ENCODE measurements at regions of chr2 and their contacts with region 1.

Region 1: GRCh38 chr2:165874445-165875039 is 79.0 kb downstream of the TTC21B start:
- DNase-seq: peak in 1 of 2 experiments; percentile 71
- H3K4me3 ChIP-seq: no peak overlapping the region
- H3K27ac ChIP-seq: no peak overlapping the region
- H3K4me1 ChIP-seq: no peaks in the 10 kb centered on the region
- H3K27me3 ChIP-seq: no peaks in the 10 kb centered on the region
- CTCF ChIP-seq: peak; percentile 72

Region 2: GRCh38 chr2:165015052-165015642 is 859.4 kb before region 1 on chr2:
- CTCF ChIA-PET with region 1: no interaction called
- POLR2A ChIA-PET with region 1: no interaction called
- intact Hi-C with region 1: loop called (anchors 10 kb)
- DNase-seq: peak in 1 of 2 experiments; percentile 40
- H3K4me3 ChIP-seq: no peak overlapping the region
- H3K27ac ChIP-seq: no peak overlapping the region
- H3K4me1 ChIP-seq: no peaks in the 10 kb centered on the region
- H3K27me3 ChIP-seq: no peaks in the 10 kb centered on the region
- CTCF ChIP-seq: peak; percentile 85

Region 3: DNA sequence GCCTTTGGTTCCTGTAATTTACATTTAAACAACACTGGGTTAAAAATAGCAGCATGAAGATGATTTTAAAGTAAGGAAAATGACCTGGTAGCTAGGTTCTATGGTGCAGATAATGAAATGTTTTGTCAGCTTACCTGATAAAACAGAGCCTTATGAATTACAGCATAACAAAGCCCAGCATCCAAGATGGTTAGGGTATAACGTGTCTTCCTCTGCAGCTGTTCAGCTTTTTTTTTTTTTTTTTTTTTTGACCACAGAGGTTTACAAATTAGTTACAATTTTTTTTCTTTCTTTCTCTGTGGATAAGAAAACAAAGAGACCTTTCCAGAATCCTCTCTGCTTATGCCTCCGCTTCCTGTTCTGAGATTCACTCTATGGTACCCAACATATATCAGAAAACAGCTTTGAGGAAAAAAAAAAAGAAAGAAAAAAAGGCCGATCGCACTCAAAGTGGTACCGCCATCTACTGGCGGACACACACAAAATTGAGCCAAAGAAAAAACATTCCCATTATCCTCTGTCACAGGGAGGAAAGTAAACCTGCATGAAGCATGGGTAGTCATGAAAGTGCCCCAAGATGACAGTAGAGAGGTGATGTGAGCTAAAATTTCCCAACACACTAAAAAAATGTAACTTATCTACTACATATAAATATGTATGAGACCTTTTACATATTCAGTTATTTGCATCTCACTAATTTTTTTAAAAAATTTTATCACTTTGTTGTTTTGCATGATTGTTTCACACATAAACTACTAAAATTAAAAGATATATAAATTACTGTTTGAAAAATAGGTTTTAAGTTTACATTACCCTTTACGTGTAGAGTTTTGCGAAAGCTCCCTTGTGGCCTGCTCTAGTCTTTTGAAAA is 670.6 kb before region 1 on chr2 and contains the start of gene SCN3A:
- CTCF ChIA-PET with region 1: interaction called, 12 read pairs
- POLR2A ChIA-PET with region 1: no interaction called
- intact Hi-C with region 1: no loop called
- DNase-seq: peak in 1 of 2 experiments; percentile 10
- H3K4me3 ChIP-seq: no peak within 1 kb of the TSS
- H3K27ac ChIP-seq: no peak within 1 kb of the TSS
- H3K4me1 ChIP-seq: no peaks in the 10 kb centered on the region
- H3K27me3 ChIP-seq: no peaks in the 10 kb centered on the region
- CTCF ChIP-seq: peak; percentile 66
- total RNA-seq, gene SCN3A: not detected in 2 replicates

Region 4: GRCh38 chr2:165401285-165401852 is 473.2 kb before region 1 on chr2:
- CTCF ChIA-PET with region 1: interaction called, 3 read pairs
- POLR2A ChIA-PET with region 1: interaction called, 7 read pairs
- intact Hi-C with region 1: loop called (anchors 1 kb)
- DNase-seq: no peak
- H3K4me3 ChIP-seq: no peak overlapping the region
- H3K27ac ChIP-seq: no peak overlapping the region
- H3K4me1 ChIP-seq: no peaks in the 10 kb centered on the region
- H3K27me3 ChIP-seq: no peaks in the 10 kb centered on the region
- CTCF ChIP-seq: peak; percentile 69

Region 5: DNA sequence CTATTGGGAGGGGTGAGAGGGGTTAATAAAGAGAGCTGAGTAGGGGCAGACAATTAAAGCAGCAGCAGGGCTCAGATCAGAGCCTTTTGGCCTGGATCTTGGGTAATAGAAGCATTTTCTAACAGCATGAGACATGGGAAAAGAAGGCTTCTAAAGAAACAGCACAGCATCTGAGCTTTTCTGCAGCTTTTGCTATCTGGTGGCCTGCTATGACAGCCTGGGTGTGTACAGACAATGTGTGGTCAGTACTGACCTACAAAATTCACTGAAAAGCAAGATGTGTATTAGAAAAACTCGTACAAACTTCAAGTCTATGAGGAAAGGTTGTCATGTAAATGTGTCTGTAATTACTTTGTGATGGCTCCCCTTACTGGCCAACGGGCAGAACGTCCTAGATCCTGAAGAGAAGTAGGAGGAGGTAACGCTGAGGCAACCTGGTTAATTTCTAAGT is 176.1 kb before region 1 on chr2:
- CTCF ChIA-PET with region 1: no interaction called
- POLR2A ChIA-PET with region 1: no interaction called
- intact Hi-C with region 1: loop called (anchors 1 kb)
- DNase-seq: peak in 1 of 2 experiments; percentile 14
- H3K4me3 ChIP-seq: no peak overlapping the region
- H3K27ac ChIP-seq: no peak overlapping the region
- H3K4me1 ChIP-seq: no peaks in the 10 kb centered on the region
- H3K27me3 ChIP-seq: no peaks in the 10 kb centered on the region
- CTCF ChIP-seq: peak; percentile 44

Region 6: GRCh38 chr2:165778653-165779451 is 95.7 kb before region 1 on chr2:
- CTCF ChIA-PET with region 1: interaction called, 4 read pairs
- POLR2A ChIA-PET with region 1: no interaction called
- intact Hi-C with region 1: loop called (anchors 5 kb)
- DNase-seq: no peak
- H3K4me3 ChIP-seq: no peak overlapping the region
- H3K27ac ChIP-seq: no peak overlapping the region
- H3K4me1 ChIP-seq: no peaks in the 10 kb centered on the region
- H3K27me3 ChIP-seq: no peaks in the 10 kb centered on the region
- CTCF ChIP-seq: peak; percentile 40; the same call in 1 of the 2 replicates